Lower leg skin (tissue), 4 donors: ENCODE measurements at regions of chr5 and their contacts with region 1.

Region 1: DNA sequence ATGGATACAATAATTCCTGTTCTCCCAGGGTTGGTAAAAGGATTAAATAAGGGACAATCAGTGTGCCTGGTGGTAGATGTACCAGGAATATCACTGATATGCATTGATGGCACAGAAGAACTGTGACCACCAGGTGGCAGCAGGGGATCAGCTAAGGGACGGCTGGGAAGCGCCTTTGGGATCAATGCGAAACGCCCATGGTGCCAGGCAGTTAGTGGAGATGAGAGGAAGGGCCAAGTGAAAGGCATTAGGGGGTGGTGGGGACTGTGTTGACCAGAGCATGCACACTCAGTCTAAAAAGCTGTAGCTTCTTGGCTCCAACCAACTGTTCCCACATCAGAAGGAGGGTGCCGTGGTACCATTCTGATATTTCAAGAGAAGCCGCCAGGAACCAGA is 55.6 kb downstream of the ARHGEF37 start:
- DNase-seq: peak in 1 of 2 donors; percentile 76
- H3K4me3 ChIP-seq: no peak overlapping the region
- CTCF ChIP-seq: peak in 1 of 3 donors; percentile 93
- POLR2A ChIP-seq: no peak

Region 2: GRCh38 chr5:149271716-149272563 is 364.9 kb before region 1 on chr5 and contains the start of gene AFAP1L1:
- intact Hi-C with region 1: no loop called
- DNase-seq: peak; percentile 65 to 95
- H3K4me3 ChIP-seq: peak within 1 kb of the TSS; percentile 62
- CTCF ChIP-seq: no peak
- POLR2A ChIP-seq: no peak
- total RNA-seq, gene AFAP1L1: 6.3 to 10.8 (median 8.0) TPM

Region 3: GRCh38 chr5:149485655-149486425 is 151.0 kb before region 1 on chr5:
- intact Hi-C with region 1: no loop called
- DNase-seq: peak; percentile 93
- H3K4me3 ChIP-seq: no peak overlapping the region
- CTCF ChIP-seq: no peak
- POLR2A ChIP-seq: no peak

Region 4: DNA sequence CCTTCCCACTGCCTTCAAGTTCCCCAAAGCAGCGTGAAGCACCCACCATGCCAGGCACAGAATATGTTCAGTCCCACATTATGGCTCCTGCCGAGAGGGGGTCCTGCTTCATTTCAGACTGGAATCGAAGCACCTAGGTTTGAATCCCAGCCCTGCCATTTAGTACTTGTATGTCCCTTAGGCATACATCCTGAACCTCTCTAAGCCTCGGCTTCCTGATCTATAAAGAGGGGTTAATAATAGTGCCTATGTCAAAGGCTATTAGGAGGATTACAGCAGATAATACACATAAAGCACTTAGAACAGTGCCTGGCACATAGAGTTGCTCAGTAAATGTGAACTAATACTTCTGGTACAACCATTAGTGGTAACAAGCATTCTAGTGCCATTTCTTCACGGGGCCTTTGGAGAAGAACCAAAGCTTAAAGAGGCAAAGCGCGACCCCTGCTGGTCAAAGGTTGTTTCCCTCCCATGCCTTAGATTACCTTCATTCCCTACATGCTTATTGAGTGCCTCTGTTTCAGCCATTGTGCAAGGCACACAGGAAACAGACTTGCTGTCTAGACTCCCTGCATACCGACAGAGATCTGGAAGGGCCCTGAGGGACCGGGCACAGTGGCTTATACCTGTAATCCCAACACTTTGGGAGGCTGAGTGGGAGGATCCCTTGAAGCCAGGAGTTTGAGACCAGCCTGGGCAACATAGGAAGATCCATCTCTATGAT is 191.5 kb after region 1 on chr5:
- intact Hi-C with region 1: loop called (anchors 2 kb)
- DNase-seq: peak; percentile 91 to 97
- H3K4me3 ChIP-seq: no peak overlapping the region
- CTCF ChIP-seq: peak in 1 of 3 donors; percentile 88
- POLR2A ChIP-seq: no peak

Region 5: GRCh38 chr5:149990518-149991376 is 353.9 kb after region 1 on chr5:
- intact Hi-C with region 1: loop called (anchors 10 kb)
- DNase-seq: peak; percentile 74 to 92
- H3K4me3 ChIP-seq: no peak overlapping the region
- CTCF ChIP-seq: peak in 1 of 3 donors; percentile 78
- POLR2A ChIP-seq: no peak